ENCODE measurements at regions of chr9 and their contacts with region 1.

Region 1: DNA sequence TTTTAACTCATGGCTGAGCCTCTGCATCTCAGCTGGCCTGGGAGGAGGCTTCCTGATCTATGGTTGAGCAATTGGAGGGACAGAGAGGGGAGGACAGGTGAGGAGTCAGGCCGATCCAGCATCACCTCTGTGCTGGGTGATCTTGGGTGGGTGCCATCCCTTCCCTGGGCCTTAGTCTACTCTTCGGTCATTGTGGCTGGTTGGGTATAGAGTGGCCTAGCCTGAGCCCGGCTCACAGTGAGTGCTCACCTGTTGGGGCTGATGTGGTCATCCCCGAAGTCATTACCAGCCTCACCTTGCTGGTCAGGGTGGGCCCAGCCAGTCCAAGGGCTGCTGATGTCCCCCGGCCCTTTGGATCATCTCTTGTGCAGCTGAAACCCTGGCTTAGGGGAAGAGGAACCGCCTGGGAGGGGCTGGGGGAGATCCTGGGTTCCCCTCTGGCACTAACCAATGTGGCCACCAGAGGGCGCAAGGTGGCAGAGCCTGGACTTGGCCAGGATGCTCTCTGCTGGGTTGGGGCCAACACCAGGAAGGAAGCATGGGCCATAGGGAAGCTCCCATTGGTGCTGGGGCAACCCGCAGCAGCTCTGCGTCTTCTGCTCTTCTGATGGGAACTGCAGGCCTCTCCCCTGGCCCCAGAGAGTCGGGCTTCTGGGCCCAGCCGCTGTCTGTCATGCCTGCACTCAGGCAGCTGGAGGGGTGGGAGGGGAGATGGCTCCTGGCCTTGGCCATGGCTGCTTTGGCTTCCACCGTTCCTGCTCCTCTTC is 17.3 kb upstream of the ODF2 start:
- DNase-seq: peak; percentile 76 to 80
- ATAC-seq: peak; percentile 91 to 97
- H3K4me3 ChIP-seq: no peak overlapping the region
- H3K27ac ChIP-seq: peak overlapping the region in 1 of 2 experiments; percentile 72; a peak in 3 of 6 replicates
- H3K4me1 ChIP-seq: peaks cover 3% of the 10 kb centered on the region; the same call in 2 of the 3 replicates
- CTCF ChIP-seq: peak; percentile 81
- EP300 ChIP-seq: no peak
- POLR2A ChIP-seq: no peak
- RAD21 ChIP-seq: peak; percentile 66 to 73

Region 2: DNA sequence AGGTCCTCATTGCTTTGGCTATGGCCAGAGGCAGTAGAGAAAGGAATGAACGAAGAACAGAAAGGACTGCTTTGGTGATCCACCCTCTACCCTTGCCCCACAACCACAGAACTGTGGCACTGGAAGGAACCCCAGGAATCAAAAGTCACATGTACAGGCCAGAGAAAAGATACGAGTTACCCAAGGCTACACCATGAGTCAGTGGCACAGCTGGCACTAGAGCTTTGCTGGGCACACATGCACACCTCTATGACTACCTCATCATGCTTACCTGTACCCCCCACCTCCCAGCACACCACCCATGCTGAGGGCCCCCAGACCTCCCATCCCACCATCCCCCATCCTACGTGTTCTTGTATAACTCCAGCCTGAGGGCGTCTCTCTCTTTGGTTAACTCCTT is 175.8 kb before region 1 on chr9:
- CTCF ChIA-PET with region 1: no interaction called
- POLR2A ChIA-PET with region 1: no interaction called
- DNase-seq: no peak
- ATAC-seq: no peak
- H3K4me3 ChIP-seq: no peak overlapping the region
- H3K27ac ChIP-seq: no peak overlapping the region
- H3K4me1 ChIP-seq: no peaks in the 10 kb centered on the region
- CTCF ChIP-seq: no peak
- EP300 ChIP-seq: no peak
- POLR2A ChIP-seq: no peak
- RAD21 ChIP-seq: no peak

Region 3: DNA sequence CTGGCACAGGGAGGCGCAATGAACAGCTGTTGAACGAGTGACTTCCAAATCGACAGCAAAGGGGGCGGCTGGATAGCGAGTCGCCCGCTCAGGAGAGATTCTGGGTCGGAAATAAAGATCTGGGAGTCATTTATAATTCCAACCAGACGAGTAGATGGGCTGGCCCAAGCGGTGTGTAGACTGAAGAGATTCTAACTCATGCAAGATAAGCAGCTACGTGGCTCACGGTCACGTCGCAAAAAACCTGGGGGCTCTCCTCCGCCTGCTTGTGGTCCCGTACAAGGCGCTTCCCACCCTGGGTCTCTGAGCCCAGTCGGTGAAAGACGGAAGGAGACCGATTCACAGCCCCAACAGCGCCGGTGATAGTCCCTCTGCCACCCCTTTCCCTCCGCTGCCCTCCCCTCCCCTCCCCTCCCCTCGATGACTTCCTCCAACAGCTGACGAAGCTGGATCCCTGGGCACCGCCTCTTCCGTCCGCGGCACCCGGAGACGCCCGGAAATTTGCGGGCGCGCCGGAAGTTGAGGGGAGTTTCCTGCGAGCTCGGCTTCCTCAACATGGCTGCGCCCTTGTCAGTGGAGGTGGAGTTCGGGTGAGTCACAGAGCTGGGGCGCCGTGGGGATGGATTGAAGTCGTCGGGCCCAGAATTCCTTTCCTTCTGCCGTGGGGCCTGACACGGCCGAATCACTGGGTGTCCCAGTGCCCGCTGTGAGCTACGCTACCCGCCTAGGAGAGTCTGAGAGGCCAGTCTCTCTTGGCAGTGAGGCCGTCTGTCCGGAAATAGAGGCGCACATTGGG is 67.5 kb before region 1 on chr9 and contains the start of gene URM1:
- CTCF ChIA-PET with region 1: interaction called, 14 read pairs
- POLR2A ChIA-PET with region 1: no interaction called
- DNase-seq: peak; percentile 94 to 97
- ATAC-seq: peak; percentile 96 to 98
- H3K4me3 ChIP-seq: peak within 1 kb of the TSS; percentile 83
- H3K27ac ChIP-seq: peak within 1 kb of the TSS; percentile 89 to 90
- H3K4me1 ChIP-seq: peaks cover 19% of the 10 kb centered on the region; the same call in 2 of the 3 replicates
- CTCF ChIP-seq: no peak; the same call in 1 of the 3 replicates
- EP300 ChIP-seq: no peak
- POLR2A ChIP-seq: peak; percentile 83
- RAD21 ChIP-seq: no peak
- polyA plus RNA-seq, gene URM1: 43.6 and 61.6 TPM in 2 replicates

Region 4: DNA sequence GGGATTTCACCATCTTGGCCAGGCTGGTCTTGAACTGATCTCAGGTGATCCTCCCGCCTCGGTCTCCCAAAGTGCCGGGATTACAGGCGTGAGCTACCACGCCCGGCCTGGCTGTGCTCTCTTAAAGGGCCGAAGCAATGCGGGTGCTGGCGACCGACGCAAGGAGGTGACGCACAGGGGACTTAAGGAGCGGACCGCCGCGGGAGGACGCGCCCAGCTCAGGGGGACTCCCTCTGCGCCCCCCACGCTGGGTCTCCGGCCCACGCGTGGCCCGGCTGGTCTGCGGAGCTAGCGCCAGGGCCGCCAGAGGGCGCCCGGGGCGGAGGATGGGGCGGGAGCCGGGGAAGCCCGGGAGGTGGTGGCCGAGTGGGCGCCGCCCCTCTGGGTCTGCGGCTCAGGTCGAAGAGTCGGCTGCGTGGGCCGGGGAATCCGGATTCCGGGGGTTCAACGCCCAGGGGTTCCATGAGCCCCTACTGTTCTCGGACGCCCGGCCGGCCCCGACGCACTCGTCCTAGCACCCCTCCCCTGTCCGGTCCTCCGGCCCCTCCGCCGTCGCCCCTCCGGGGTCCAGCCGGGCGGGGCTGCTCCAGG is 18.4 kb before region 1 on chr9:
- CTCF ChIA-PET with region 1: interaction called, 171 read pairs
- POLR2A ChIA-PET with region 1: no interaction called
- DNase-seq: peak; percentile 60 to 71
- ATAC-seq: peak; percentile 88
- H3K4me3 ChIP-seq: peak overlapping the region; percentile 80
- H3K27ac ChIP-seq: peak overlapping the region; percentile 84 to 95
- H3K4me1 ChIP-seq: peaks cover 17% of the 10 kb centered on the region; the same call in 2 of the 3 replicates
- CTCF ChIP-seq: peak; percentile 91
- EP300 ChIP-seq: no peak
- POLR2A ChIP-seq: peak; percentile 28
- RAD21 ChIP-seq: peak; percentile 24 to 45; a peak in 3 of 5 replicates

Region 5: DNA sequence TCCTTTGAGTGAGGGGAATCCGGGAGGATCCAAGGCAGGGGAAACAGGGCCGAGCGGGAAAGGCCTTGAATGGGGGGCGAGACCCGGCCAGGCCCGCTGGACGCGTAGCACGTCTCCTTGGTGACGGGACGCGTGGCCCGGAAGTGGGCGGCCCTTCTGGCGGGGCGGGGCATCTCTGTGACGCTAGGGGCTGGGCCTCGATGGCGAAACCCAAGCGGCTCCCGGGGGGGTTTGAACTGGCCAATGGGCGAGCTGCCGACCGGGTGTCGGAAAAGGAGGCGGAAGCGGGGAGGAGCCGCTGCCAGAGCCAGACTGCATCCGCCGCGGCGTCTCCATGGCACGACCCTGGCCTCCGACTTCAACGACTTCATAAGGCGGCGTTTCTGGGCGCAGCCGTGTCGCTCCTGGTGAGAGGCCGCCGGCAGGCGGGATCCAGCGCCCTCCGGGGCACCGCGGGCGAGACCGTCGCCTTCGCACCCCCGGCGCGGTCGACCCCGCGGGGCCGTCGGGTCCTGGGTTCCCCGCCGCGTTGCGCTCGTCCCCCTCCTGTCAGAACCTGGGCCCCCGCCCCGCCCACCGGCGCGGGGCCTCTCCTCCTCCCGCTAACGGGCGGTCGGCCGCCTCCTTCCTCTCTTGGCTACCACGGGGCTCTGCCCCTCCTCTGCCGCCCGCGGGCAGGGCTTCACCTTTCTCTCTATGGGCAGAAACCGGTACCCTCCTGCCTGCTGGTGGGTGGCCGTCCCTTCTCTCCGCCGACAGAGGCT is 17.5 kb after region 1 on chr9 and contains the start of gene ODF2:
- CTCF ChIA-PET with region 1: interaction called, 84 read pairs
- POLR2A ChIA-PET with region 1: no interaction called
- DNase-seq: peak; percentile 96 to 98
- ATAC-seq: peak; percentile 89
- H3K4me3 ChIP-seq: peak within 1 kb of the TSS; percentile 100
- H3K27ac ChIP-seq: peak within 1 kb of the TSS; percentile 89 to 95
- H3K4me1 ChIP-seq: peaks cover 9% of the 10 kb centered on the region
- CTCF ChIP-seq: no peak
- EP300 ChIP-seq: no peak
- POLR2A ChIP-seq: peak; percentile 55
- RAD21 ChIP-seq: no peak
- polyA plus RNA-seq, gene ODF2: 22.9 and 24.7 TPM in 2 replicates

Region 6: GRCh38 chr9:128495799-128496417 is 57.4 kb after region 1 on chr9:
- CTCF ChIA-PET with region 1: interaction called, 5 read pairs
- POLR2A ChIA-PET with region 1: interaction called, 13 read pairs
- DNase-seq: peak in 1 of 2 experiments; percentile 52
- ATAC-seq: peak; percentile 42 to 65; a peak in 4 of 6 replicates
- H3K4me3 ChIP-seq: no peak overlapping the region
- H3K27ac ChIP-seq: no peak overlapping the region
- H3K4me1 ChIP-seq: no peaks in the 10 kb centered on the region
- CTCF ChIP-seq: no peak
- EP300 ChIP-seq: no peak
- POLR2A ChIP-seq: no peak
- RAD21 ChIP-seq: peak in 1 of 2 experiments; percentile 20; a peak in 1 of 5 replicates

Measured in A549 (cell line).